ENCODE measurements at regions of chr21 and their contacts with region 1.

Region 1: DNA sequence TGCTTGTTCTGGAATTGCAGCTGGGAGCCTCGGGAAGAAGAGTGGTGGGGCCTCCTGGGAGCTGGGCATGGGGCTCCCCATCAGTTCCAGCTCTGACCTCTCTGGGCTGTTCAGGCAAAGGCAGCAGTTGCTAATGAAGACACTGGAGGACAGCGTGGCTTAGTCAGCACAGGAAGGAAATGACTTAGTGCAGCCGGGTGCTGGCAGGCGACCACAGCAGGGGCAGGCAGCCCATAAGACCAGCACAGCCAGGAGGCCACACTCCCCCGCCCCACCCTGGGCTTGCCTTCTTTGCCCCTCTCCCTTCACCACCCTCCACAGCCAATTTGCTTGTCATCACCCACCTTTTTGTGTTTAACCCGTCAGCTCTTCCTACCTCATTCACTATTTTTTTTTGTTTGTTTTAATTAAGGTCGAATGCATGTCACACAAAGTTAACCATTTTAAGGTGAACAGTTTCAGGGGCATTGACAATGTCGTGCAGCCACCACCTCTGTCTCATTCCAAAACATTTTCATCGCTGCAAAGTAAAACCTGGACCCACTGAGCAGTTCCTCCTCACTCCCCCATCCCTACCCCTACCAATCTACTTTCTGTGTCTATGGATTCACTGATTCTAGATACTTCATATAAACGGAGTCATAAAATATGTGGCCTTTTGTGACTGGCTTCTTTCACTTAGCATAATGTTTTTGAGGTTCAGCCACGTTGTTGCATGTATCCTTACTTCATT is 10.9 kb downstream of the OLIG2 start:
- DNase-seq: peak; percentile 44 to 61
- ATAC-seq: peak; percentile 92 to 99 (median 98)
- H3K4me3 ChIP-seq: no peak overlapping the region
- H3K4me3 Mint-ChIP-seq: peak overlapping the region; percentile 38
- H3K27ac ChIP-seq: no peak overlapping the region
- H3K27ac Mint-ChIP-seq: peak overlapping the region; percentile 59 to 86
- H3K4me1 ChIP-seq: peaks cover 27% of the 10 kb centered on the region
- H3K4me1 Mint-ChIP-seq: peaks cover 23 to 24% of the 10 kb centered on the region in 2 donors
- H3K27me3 ChIP-seq: peaks cover 18% of the 10 kb centered on the region
- H3K27me3 Mint-ChIP-seq: peaks cover 20 to 27% of the 10 kb centered on the region in 2 donors
- CTCF ChIP-seq: no peak

Region 2: GRCh38 chr21:33019885-33020557 is 16.6 kb before region 1 on chr21:
- intact Hi-C with region 1: loop called (anchors 2 kb)
- DNase-seq: peak in 1 of 2 donors; percentile 35
- ATAC-seq: peak; percentile 49 to 68 (median 50)
- H3K4me3 ChIP-seq: no peak overlapping the region
- H3K4me3 Mint-ChIP-seq: peak overlapping the region; percentile 84
- H3K27ac ChIP-seq: no peak overlapping the region
- H3K27ac Mint-ChIP-seq: peak overlapping the region in 1 of 2 donors; percentile 52
- H3K4me1 ChIP-seq: peaks cover 48% of the 10 kb centered on the region
- H3K4me1 Mint-ChIP-seq: peaks cover 42 to 56% of the 10 kb centered on the region in 2 donors
- H3K27me3 ChIP-seq: peaks cover 66% of the 10 kb centered on the region
- H3K27me3 Mint-ChIP-seq: peaks cover 76 to 80% of the 10 kb centered on the region in 2 donors
- CTCF ChIP-seq: no peak

Region 3: GRCh38 chr21:33078907-33079582 is 42.4 kb after region 1 on chr21:
- intact Hi-C with region 1: loop called (anchors 5 kb)
- DNase-seq: peak; percentile 33 to 36
- ATAC-seq: peak; percentile 91 to 97 (median 95)
- H3K4me3 ChIP-seq: no peak overlapping the region
- H3K4me3 Mint-ChIP-seq: no peak overlapping the region
- H3K27ac ChIP-seq: no peak overlapping the region
- H3K27ac Mint-ChIP-seq: peak overlapping the region in 1 of 2 donors; percentile 85
- H3K4me1 ChIP-seq: peaks cover 7% of the 10 kb centered on the region
- H3K4me1 Mint-ChIP-seq: peaks cover 28 to 32% of the 10 kb centered on the region in 2 donors
- H3K27me3 ChIP-seq: peaks cover 5% of the 10 kb centered on the region
- H3K27me3 Mint-ChIP-seq: peaks cover 22 to 24% of the 10 kb centered on the region in 2 donors
- CTCF ChIP-seq: no peak

Region 4: GRCh38 chr21:34570313-34570712 is 1533.7 kb after region 1 on chr21:
- intact Hi-C with region 1: no loop called
- DNase-seq: no peak
- ATAC-seq: no peak
- H3K4me3 ChIP-seq: no peak overlapping the region
- H3K4me3 Mint-ChIP-seq: no peak overlapping the region
- H3K27ac ChIP-seq: no peak overlapping the region
- H3K27ac Mint-ChIP-seq: no peak overlapping the region
- H3K4me1 ChIP-seq: peaks cover 16% of the 10 kb centered on the region
- H3K4me1 Mint-ChIP-seq: peaks cover 35 to 51% of the 10 kb centered on the region in 2 donors
- H3K27me3 ChIP-seq: peaks cover 2% of the 10 kb centered on the region
- H3K27me3 Mint-ChIP-seq: no peaks in the 10 kb centered on the region
- CTCF ChIP-seq: no peak

Measured in natural killer cell (primary cell).